ENCODE measurements at regions of chr2 and their contacts with region 1.

Region 1: GRCh38 chr2:187567126-187567525 is 12.9 kb upstream of the TFPI start:
- DNase-seq: peak; percentile 33
- H3K4me3 ChIP-seq: no peak overlapping the region
- H3K27ac ChIP-seq: no peak overlapping the region
- H3K27me3 ChIP-seq: no peaks in the 10 kb centered on the region
- CTCF ChIP-seq: no peak

Region 2: DNA sequence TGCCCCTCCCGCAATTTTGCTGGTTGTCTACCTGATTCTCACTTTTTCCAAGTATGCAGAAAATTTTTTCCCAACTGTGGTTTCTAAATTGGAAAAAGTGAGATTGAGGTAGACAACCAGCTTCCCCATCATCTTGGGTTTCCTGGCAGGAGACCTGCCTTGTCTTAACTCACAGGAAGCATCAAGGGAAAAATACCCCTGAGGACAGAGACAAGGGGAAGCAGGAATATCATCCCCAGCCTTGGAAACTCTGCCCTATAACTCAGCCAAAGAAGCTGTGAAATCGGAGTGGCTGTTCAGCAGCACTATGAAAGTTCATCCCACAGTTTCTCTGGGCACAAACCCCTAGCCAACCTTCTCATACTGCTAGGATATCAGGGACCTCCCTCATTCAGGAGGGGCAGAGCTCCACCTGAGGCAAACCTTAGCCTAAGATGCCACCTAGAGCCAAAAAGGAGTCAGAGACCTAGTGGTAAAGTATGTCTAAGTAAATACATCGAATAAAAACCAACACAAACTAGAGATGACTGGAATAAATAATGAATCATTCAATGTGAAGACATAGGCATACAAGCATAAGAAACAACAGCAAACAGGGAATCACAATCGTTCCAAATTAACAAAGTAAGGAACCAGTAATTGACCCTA is 786.3 kb before region 1 on chr2:
- CTCF ChIA-PET with region 1: no interaction called
- POLR2A ChIA-PET with region 1: no interaction called
- DNase-seq: no peak
- H3K4me3 ChIP-seq: no peak overlapping the region
- H3K27ac ChIP-seq: no peak overlapping the region
- H3K27me3 ChIP-seq: no peaks in the 10 kb centered on the region
- CTCF ChIP-seq: no peak

Region 3: DNA sequence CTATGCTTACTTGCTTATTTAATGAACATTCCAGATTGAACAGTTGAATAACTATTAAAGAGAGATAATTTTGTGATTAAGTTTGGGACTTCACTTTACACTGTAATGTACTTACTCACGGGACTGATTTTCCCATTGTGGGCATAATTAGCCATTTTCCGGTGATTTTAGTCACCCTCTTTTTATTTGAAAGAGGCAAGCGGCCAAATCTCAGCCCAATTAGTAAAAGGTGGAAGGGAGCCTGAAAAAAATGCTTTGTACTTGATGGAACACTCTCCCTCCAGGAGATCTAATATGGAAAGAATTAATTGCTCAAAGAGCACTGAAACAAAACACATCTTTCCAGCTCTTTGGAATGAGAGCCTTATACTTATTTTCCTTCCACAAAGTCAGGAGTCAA is 169.2 kb before region 1 on chr2:
- CTCF ChIA-PET with region 1: no interaction called
- POLR2A ChIA-PET with region 1: no interaction called
- DNase-seq: no peak
- H3K4me3 ChIP-seq: no peak overlapping the region
- H3K27ac ChIP-seq: no peak overlapping the region
- H3K27me3 ChIP-seq: no peaks in the 10 kb centered on the region
- CTCF ChIP-seq: no peak

Region 4: DNA sequence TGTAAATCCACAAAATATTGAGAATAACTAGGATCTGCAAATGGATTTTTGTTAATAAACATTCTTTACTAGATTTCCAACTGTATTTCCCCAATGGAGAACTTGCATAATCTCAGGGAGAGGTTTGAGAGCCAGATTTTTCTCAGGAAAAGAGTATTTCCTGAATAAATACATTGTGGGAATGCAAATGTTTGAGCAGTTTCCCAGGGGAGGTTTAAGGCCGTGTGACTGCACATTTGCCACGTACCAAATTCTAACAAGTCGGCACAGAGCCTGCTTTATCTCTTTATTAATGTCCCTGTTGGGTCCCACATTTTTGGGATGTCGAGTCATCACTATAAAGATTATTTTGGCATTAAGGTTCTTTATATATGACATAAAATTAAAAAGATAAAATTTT is 39.9 kb before region 1 on chr2:
- CTCF ChIA-PET with region 1: no interaction called
- POLR2A ChIA-PET with region 1: no interaction called
- DNase-seq: peak; percentile 13
- H3K4me3 ChIP-seq: no peak overlapping the region
- H3K27ac ChIP-seq: no peak overlapping the region
- H3K27me3 ChIP-seq: no peaks in the 10 kb centered on the region
- CTCF ChIP-seq: no peak

Region 5: DNA sequence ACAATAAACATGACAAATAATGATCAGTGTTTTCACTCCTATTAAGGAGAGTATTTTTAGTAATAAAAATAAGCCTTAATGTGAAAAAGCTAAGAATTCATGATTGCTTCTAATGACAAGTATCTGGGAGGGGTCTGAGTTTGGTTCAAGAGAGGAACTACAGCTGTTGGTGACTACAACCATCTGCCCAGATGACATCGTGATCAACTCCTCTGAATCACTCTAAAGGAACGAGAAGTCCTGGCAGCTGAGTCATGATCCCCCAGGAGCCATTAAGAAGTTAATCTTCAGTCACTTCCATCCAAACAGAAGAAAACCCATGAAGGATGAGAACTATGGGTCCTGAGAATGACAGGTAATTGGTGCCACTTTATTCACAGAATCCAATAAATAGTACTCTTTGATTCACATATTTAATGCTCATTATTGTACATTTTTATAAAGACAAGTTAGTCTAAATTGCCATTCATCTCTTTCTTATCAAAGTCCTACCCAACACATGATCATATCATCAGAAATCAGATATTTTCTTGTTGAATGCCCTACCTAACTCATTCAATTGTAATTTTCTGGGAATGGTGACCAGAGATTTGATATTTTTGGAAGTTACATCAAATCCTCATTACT is 19.7 kb before region 1 on chr2:
- CTCF ChIA-PET with region 1: interaction called, 3 read pairs
- POLR2A ChIA-PET with region 1: interaction called, 10 read pairs
- DNase-seq: peak; percentile 81
- H3K4me3 ChIP-seq: no peak overlapping the region
- H3K27ac ChIP-seq: no peak overlapping the region
- H3K27me3 ChIP-seq: no peaks in the 10 kb centered on the region
- CTCF ChIP-seq: no peak